ENCODE measurements at regions of chr5 and their contacts with region 1.

Region 1: GRCh38 chr5:98928873-98929696 is at the start of gene CHD1:
- DNase-seq: peak; percentile 97
- H3K4me3 Mint-ChIP-seq: peak within 1 kb of the TSS; percentile 99
- H3K27ac Mint-ChIP-seq: peak within 1 kb of the TSS; percentile 100
- H3K4me1 Mint-ChIP-seq: peaks cover 55% of the 10 kb centered on the region
- H3K27me3 Mint-ChIP-seq: no peaks in the 10 kb centered on the region
- total RNA-seq, gene CHD1: 50.1 to 53.4 TPM

Region 2: GRCh38 chr5:97183100-97183929 is 1745.8 kb before region 1 on chr5 and contains the start of gene RIOK2:
- CTCF ChIA-PET with region 1: no interaction called
- POLR2A ChIA-PET with region 1: interaction called, 3 read pairs
- intact Hi-C with region 1: loop called (anchors 1 kb)
- DNase-seq: peak; percentile 96
- H3K4me3 Mint-ChIP-seq: peak within 1 kb of the TSS; percentile 87
- H3K27ac Mint-ChIP-seq: peak within 1 kb of the TSS; percentile 98
- H3K4me1 Mint-ChIP-seq: peaks cover 34% of the 10 kb centered on the region
- H3K27me3 Mint-ChIP-seq: no peaks in the 10 kb centered on the region
- total RNA-seq, gene RIOK2: 31.8 to 41.5 TPM

Region 3: DNA sequence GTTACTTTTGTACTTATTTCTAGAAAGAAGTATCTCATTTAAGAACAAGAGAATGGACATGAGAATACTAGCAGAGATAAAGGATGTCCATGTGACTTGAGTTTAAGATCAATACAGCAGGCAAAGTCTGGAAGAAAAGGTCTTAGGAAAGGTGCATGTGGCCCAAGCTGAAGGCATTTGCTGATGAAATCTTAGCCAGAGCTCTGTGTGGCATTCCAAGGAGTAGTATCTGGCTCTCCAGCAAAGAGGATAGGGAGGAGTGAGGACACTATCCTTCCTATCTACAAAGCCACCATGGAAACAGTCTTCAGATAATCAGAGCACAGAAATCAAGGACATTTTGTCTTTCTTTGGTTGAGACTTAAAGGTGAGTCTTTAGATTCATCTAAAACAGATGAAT is 399.8 kb before region 1 on chr5:
- CTCF ChIA-PET with region 1: no interaction called
- POLR2A ChIA-PET with region 1: no interaction called
- intact Hi-C with region 1: no loop called
- DNase-seq: no peak
- H3K4me3 Mint-ChIP-seq: no peak overlapping the region
- H3K27ac Mint-ChIP-seq: no peak overlapping the region
- H3K4me1 Mint-ChIP-seq: no peaks in the 10 kb centered on the region
- H3K27me3 Mint-ChIP-seq: no peaks in the 10 kb centered on the region

Region 4: DNA sequence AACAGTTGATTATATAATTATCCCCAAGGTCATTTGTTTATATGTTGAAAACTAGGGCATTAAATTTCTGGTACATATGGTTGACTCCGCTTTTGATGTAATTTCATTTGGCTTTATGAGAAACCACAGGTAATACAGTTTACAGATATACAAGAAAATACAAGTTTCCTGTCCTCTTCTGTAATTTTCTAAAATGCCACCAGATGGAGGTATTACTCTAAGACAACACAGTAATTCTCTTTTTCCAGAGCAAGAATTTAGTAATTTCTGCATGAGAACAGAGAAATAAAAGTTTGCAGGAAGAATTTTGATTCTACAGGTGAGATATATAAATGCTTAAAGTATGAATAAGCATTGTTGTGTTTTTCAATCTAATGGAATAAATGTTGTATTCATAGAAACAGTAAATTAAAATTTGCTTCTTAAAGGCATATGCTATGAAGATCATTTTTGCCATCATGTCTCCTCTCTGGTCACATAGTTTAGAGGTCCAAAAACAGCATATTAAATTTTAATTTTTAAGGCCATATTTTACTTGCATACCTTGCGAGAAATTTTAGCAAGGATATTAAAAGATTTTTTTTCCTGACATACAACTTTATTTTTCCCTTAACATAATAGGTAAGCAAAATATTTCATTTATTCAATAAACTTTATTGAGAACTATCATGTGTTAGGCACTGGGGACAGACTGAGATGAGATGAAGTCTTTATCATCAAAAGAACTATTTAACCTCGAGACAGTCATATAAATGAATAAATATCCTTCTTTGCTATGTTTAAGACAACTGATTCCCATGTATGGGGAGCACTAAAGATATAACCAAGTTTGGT is 23.0 kb before region 1 on chr5:
- CTCF ChIA-PET with region 1: interaction called, 4 read pairs
- POLR2A ChIA-PET with region 1: interaction called, 7 read pairs
- intact Hi-C with region 1: loop called (anchors 2 kb)
- DNase-seq: no peak
- H3K4me3 Mint-ChIP-seq: no peak overlapping the region
- H3K27ac Mint-ChIP-seq: no peak overlapping the region
- H3K4me1 Mint-ChIP-seq: peaks cover 58% of the 10 kb centered on the region
- H3K27me3 Mint-ChIP-seq: no peaks in the 10 kb centered on the region

Region 5: GRCh38 chr5:98917433-98917832 is 11.7 kb before region 1 on chr5:
- CTCF ChIA-PET with region 1: no interaction called
- POLR2A ChIA-PET with region 1: interaction called, 6 read pairs
- intact Hi-C with region 1: loop called (anchors 1 kb)
- DNase-seq: no peak
- H3K4me3 Mint-ChIP-seq: no peak overlapping the region
- H3K27ac Mint-ChIP-seq: no peak overlapping the region
- H3K4me1 Mint-ChIP-seq: peaks cover 72% of the 10 kb centered on the region
- H3K27me3 Mint-ChIP-seq: no peaks in the 10 kb centered on the region

Region 6: GRCh38 chr5:99004960-99005359 is 75.9 kb after region 1 on chr5:
- CTCF ChIA-PET with region 1: interaction called, 5 read pairs
- POLR2A ChIA-PET with region 1: interaction called, 3 read pairs
- intact Hi-C with region 1: loop called (anchors 2 kb)
- DNase-seq: peak; percentile 35
- H3K4me3 Mint-ChIP-seq: no peak overlapping the region
- H3K27ac Mint-ChIP-seq: no peak overlapping the region
- H3K4me1 Mint-ChIP-seq: peaks cover 16% of the 10 kb centered on the region
- H3K27me3 Mint-ChIP-seq: no peaks in the 10 kb centered on the region

Region 7: GRCh38 chr5:100535060-100536005 is 1606.2 kb after region 1 on chr5 and contains the start of gene FAM174A:
- CTCF ChIA-PET with region 1: no interaction called
- POLR2A ChIA-PET with region 1: no interaction called
- intact Hi-C with region 1: loop called (anchors 5 kb)
- DNase-seq: peak; percentile 96
- H3K4me3 Mint-ChIP-seq: peak within 1 kb of the TSS; percentile 98
- H3K27ac Mint-ChIP-seq: peak within 1 kb of the TSS; percentile 87
- H3K4me1 Mint-ChIP-seq: peaks cover 22% of the 10 kb centered on the region
- H3K27me3 Mint-ChIP-seq: no peaks in the 10 kb centered on the region
- total RNA-seq, gene FAM174A: 5.8 to 8.3 TPM